ENCODE measurements at regions of chr12 and their contacts with region 1.

Region 1: DNA sequence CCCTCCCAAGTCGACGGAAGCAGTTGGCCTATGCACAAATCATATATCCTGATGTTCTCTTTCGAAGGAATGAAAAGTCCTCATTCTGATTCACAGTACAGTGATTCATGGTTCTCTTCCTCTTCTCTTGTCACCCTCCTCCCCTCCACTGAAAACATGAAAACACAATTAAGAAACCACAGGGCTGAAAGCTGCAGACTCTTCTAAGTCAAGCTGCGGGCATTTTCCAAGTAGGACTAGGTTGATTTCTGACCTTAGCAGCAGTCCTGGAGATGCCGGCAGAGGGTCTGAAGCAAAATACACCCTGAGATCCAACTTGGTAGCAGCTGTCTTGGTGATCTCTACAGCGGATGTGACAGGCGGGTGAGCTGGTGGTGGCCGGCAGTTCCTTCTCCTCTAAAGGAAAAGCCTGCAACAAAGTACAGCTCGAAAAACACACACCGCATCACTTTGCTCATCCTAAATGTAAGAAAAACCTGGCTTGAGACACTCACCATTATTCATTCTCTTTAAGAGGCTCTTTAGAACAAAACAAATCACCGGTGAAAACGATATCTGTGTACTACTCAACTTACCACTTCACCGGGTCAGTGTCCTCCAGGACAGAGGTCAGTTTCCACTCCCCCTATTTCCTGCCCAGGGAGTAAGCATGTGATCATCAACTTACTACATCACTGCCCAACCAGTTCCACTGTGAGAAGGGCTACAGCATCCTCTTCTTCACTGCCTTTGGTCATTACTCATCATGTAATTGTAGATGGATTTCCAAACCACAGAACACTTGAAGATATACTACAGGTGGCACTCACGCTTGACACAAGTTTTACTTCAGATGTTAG is 6.0 kb downstream of the TMCC3 start:
- DNase-seq: peak; percentile 54
- ATAC-seq: peak; percentile 48
- H3K4me3 Mint-ChIP-seq: peak overlapping the region; percentile 40
- H3K27ac Mint-ChIP-seq: peak overlapping the region; percentile 30
- H3K4me1 Mint-ChIP-seq: peaks cover 47% of the 10 kb centered on the region
- H3K27me3 Mint-ChIP-seq: peaks cover 76% of the 10 kb centered on the region

Region 2: DNA sequence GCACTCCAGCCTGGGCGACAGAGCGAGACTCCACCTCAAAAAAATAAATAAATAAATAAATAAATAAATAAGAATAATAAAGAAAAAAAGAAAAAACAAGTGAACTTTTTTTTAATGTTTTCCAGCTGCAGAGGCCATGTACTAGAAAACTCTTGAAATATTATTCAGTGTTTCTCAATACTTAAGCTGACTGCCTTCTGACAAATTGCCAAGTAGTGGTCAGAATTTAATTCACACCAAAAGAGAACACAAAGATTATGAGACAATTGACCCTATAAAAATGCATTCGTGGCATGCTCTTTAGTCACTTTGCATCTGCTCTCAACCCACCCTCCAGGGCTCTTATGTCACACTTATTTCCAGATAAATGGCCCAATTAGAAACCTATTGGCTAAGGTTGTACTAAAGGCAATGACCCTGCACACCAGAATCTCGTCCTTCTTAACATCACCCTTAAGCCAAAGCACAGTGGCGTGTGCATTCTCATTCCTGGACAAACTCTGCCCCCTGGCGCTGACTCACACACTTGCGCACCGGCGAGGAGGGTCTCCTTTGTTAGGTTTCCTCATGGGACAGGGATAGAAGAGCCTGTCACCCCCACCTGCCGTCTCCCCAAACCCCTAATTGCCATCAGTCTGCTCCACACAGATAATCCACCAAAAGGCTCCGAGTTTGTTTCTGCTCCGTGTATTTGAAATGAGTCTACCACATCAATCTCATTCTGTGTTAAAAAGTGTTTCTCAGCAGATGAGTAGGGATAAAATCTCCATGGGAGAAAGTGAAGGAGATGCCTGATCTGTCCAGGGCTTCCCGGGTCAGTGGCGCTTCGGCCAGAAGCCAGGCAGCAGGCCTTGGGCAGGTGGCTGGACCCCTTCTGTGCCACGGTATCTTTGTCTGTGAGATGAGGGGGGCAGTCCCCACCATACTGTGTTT is 111.6 kb before region 1 on chr12:
- CTCF ChIA-PET with region 1: no interaction called
- DNase-seq: peak; percentile 78
- ATAC-seq: peak; percentile 83
- H3K4me3 Mint-ChIP-seq: no peak overlapping the region
- H3K27ac Mint-ChIP-seq: peak overlapping the region; percentile 13
- H3K4me1 Mint-ChIP-seq: peaks cover 30% of the 10 kb centered on the region
- H3K27me3 Mint-ChIP-seq: peaks cover 5% of the 10 kb centered on the region

Region 3: GRCh38 chr12:94603434-94604365 is 40.7 kb before region 1 on chr12:
- CTCF ChIA-PET with region 1: interaction called, 10 read pairs
- DNase-seq: peak; percentile 64
- ATAC-seq: peak; percentile 61
- H3K4me3 Mint-ChIP-seq: no peak overlapping the region
- H3K27ac Mint-ChIP-seq: no peak overlapping the region
- H3K4me1 Mint-ChIP-seq: peaks cover 3% of the 10 kb centered on the region
- H3K27me3 Mint-ChIP-seq: peaks cover 37% of the 10 kb centered on the region

Region 4: GRCh38 chr12:94621664-94622359 is 22.5 kb before region 1 on chr12:
- CTCF ChIA-PET with region 1: interaction called, 10 read pairs
- DNase-seq: peak; percentile 79
- ATAC-seq: peak; percentile 99
- H3K4me3 Mint-ChIP-seq: peak overlapping the region; percentile 51
- H3K27ac Mint-ChIP-seq: peak overlapping the region; percentile 79
- H3K4me1 Mint-ChIP-seq: peaks cover 28% of the 10 kb centered on the region
- H3K27me3 Mint-ChIP-seq: no peaks in the 10 kb centered on the region

Region 5: GRCh38 chr12:94813314-94813713 is 169.0 kb after region 1 on chr12:
- CTCF ChIA-PET with region 1: no interaction called
- DNase-seq: no peak
- ATAC-seq: no peak
- H3K4me3 Mint-ChIP-seq: no peak overlapping the region
- H3K27ac Mint-ChIP-seq: no peak overlapping the region
- H3K4me1 Mint-ChIP-seq: no peaks in the 10 kb centered on the region
- H3K27me3 Mint-ChIP-seq: peaks cover 2% of the 10 kb centered on the region